ENCODE measurements at regions of chr20 and their contacts with region 1.

Region 1: GRCh38 chr20:45880988-45881788 is at the start of gene ZSWIM1:
- DNase-seq: peak; percentile 98 to 99
- ATAC-seq: peak; percentile 99 to 100
- H3K4me3 ChIP-seq: peak within 1 kb of the TSS; percentile 73
- H3K27ac ChIP-seq: peak within 1 kb of the TSS; percentile 79 to 81
- H3K4me1 ChIP-seq: peaks cover 17% of the 10 kb centered on the region
- CTCF ChIP-seq: no peak
- EP300 ChIP-seq: no peak
- POLR2A ChIP-seq: peak; percentile 89
- RAD21 ChIP-seq: no peak
- polyA plus RNA-seq, gene ZSWIM1: 4.7 and 7.6 TPM in 2 replicates

Region 2: GRCh38 chr20:45833030-45833882 is 47.9 kb before region 1 on chr20 and contains the start of gene SNX21:
- CTCF ChIA-PET with region 1: no interaction called
- POLR2A ChIA-PET with region 1: interaction called, 12 read pairs
- DNase-seq: peak; percentile 71 to 81
- ATAC-seq: peak; percentile 91 to 96
- H3K4me3 ChIP-seq: peak within 1 kb of the TSS; percentile 73
- H3K27ac ChIP-seq: peak within 1 kb of the TSS; percentile 87 to 93
- H3K4me1 ChIP-seq: peaks cover 17% of the 10 kb centered on the region; the same call in 2 of the 3 replicates
- CTCF ChIP-seq: no peak
- EP300 ChIP-seq: no peak
- POLR2A ChIP-seq: no peak; the same call in 1 of the 2 replicates
- RAD21 ChIP-seq: no peak
- polyA plus RNA-seq, gene SNX21: 4.0 and 4.1 TPM in 2 replicates

Region 3: GRCh38 chr20:45890985-45891983 is 10.1 kb after region 1 on chr20 and contains the starts of genes CTSA and NEURL2:
- CTCF ChIA-PET with region 1: interaction called, 12 read pairs
- POLR2A ChIA-PET with region 1: interaction called, 26 read pairs
- DNase-seq: peak; percentile 95 to 99
- ATAC-seq: peak; percentile 81 to 89
- H3K4me3 ChIP-seq: peak within 1 kb of the TSS; percentile 96
- H3K27ac ChIP-seq: peak within 1 kb of the TSS; percentile 90 to 99
- H3K4me1 ChIP-seq: peaks cover 14% of the 10 kb centered on the region
- CTCF ChIP-seq: no peak
- EP300 ChIP-seq: no peak
- POLR2A ChIP-seq: no peak; the same call in 1 of the 2 replicates
- RAD21 ChIP-seq: 0 out of 5 replicates have a peak, but pooled peaks of 1 of the 2 experiments have one; percentile 18
- polyA plus RNA-seq, gene CTSA: 53.1 and 61.2 TPM in 2 replicates
- polyA plus RNA-seq, gene NEURL2: 0.56 and 0.57 TPM in 2 replicates